ENCODE measurements at regions of chr14 and their contacts with region 1.

Region 1: GRCh38 chr14:88168498-88169165 is 154.4 kb downstream of the KCNK10 start:
- DNase-seq: peak; percentile 69
- ATAC-seq: peak; percentile 91
- H3K4me3 Mint-ChIP-seq: no peak overlapping the region
- H3K27ac Mint-ChIP-seq: no peak overlapping the region
- H3K4me1 Mint-ChIP-seq: no peaks in the 10 kb centered on the region
- H3K27me3 Mint-ChIP-seq: peaks cover 7% of the 10 kb centered on the region

Region 2: DNA sequence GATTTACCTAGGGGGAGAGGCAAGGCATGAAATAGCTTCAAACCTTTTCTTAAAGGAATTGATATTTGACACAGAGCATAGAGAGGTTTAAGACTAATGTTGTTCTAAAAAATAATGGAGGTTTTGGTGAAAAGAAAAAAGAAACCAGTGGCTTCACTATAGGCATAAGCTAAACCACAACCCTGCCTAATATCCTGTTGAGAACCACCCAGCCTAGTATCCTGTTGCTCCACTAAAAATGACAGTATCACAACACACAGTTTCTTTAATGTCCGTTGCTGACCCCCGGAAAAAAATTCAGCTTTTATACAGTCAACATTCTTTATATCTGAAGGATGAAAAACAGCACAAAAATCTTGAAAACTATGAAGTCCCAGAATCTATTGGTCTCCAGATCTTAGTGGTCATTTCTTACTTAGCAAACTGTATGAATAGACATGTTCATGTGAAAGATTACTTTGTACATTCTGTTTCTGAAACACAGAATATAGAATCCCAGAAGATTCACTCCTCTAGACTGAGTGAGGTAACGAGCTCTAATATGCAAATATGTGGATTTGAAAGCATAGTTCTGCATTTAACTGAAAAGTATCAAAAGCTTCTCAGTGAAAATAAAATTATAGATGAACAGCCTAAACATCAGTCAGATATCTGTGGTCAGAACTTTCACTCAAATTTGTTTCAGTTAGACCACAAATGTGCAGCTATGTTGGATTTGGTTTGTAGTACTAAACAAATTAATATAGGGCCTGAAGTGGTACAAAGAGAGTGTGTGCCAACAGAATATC is 216.1 kb before region 1 on chr14:
- CTCF ChIA-PET with region 1: interaction called, 79 read pairs
- POLR2A ChIA-PET with region 1: no interaction called
- intact Hi-C with region 1: no loop called
- DNase-seq: no peak
- ATAC-seq: no peak
- H3K4me3 Mint-ChIP-seq: no peak overlapping the region
- H3K27ac Mint-ChIP-seq: peak overlapping the region; percentile 67
- H3K4me1 Mint-ChIP-seq: peaks cover 20% of the 10 kb centered on the region
- H3K27me3 Mint-ChIP-seq: no peaks in the 10 kb centered on the region

Region 3: GRCh38 chr14:88013750-88014349 is 154.8 kb before region 1 on chr14:
- CTCF ChIA-PET with region 1: interaction called, 7 read pairs
- POLR2A ChIA-PET with region 1: no interaction called
- intact Hi-C with region 1: loop called (anchors 2 to 5 kb)
- DNase-seq: peak; percentile 50
- ATAC-seq: peak; percentile 58
- H3K4me3 Mint-ChIP-seq: no peak overlapping the region
- H3K27ac Mint-ChIP-seq: no peak overlapping the region
- H3K4me1 Mint-ChIP-seq: peaks cover 63% of the 10 kb centered on the region
- H3K27me3 Mint-ChIP-seq: no peaks in the 10 kb centered on the region

Region 4: DNA sequence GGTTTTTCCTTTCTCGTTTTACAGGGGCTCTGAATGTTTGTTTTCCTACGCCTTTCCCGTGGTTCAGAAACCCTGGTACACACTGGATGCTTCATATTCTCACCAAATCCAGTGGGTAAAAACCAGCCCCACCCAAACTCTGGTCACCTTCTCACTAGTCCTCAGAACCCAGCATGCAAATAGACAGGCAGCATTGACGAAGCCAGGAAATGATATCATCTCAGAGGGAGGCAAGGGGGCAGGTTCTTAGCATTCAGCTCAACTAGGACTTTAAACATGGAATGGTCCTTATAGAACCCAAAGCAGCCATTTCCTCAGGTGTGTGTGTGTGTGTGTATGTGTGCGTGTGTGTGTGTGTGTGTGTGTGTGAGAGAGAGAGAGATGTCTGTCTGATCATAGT is 12.4 kb after region 1 on chr14:
- CTCF ChIA-PET with region 1: interaction called, 14 read pairs
- POLR2A ChIA-PET with region 1: no interaction called
- intact Hi-C with region 1: no loop called
- DNase-seq: no peak
- ATAC-seq: peak; percentile 68
- H3K4me3 Mint-ChIP-seq: no peak overlapping the region
- H3K27ac Mint-ChIP-seq: no peak overlapping the region
- H3K4me1 Mint-ChIP-seq: peaks cover 5% of the 10 kb centered on the region
- H3K27me3 Mint-ChIP-seq: no peaks in the 10 kb centered on the region

Region 5: DNA sequence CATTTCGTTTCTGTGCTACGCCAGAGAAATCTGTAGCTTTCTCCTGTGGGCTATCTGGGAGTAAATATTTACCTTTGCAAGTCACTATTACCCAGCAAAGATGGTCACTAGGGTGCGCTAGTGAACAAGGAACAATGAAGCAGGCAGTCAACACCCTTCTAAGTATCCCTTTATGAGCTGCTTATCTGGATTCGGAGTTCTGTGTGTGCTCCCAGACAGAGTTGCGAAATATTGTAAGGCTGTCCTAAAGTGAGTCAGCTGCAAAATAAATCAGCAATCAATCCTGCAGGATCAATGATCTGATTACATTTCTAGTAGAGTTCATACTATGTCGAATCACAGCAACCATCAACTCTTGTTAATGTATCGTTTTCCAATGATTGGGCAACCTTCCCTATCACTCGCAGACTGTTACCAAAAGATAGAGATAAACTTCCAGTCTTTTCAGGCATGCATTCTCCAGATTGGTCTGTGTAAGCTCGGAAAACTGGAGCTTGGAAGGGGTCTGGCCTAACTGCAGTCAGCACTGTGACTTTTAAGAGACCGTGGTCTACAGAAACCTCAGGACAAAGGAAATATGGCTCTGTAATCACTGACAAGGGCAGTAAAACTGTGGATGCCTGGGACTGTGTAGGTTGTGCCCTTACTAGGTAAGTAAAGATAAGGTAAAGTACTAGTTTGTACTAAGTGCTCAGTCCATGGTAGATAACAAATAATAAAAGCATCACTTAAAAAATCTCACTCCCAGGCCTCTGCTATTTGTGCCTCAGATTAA is 21.0 kb after region 1 on chr14:
- CTCF ChIA-PET with region 1: interaction called, 10 read pairs
- POLR2A ChIA-PET with region 1: no interaction called
- intact Hi-C with region 1: no loop called
- DNase-seq: peak; percentile 78
- ATAC-seq: peak; percentile 64
- H3K4me3 Mint-ChIP-seq: no peak overlapping the region
- H3K27ac Mint-ChIP-seq: no peak overlapping the region
- H3K4me1 Mint-ChIP-seq: peaks cover 5% of the 10 kb centered on the region
- H3K27me3 Mint-ChIP-seq: peaks cover 10% of the 10 kb centered on the region

Region 6: DNA sequence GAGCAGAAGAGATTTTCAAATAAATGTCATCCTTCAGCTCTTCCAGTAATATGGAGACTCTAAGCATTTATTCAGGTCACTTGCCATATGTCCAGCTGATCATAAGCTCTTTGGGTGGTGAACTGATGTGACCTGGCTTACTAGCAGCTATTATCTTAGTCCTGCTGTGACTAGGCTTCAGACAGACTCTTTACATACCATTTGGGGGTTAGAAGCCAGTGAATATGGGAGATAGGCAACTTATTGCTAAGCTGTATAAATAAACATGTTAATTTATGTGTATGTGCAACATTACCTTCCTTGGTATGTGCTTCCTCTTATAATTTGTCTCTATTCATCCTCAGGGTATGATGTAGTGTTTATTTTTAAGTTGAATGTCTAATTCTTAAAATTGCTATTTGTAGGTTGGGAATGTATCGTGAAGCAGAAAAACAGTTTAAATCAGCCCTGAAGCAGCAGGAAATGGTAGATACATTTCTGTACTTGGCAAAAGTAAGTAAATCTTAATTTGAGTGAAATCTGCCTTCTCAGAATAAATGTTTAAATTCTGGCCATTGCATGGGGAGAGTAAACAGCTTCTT is 688.2 kb after region 1 on chr14:
- CTCF ChIA-PET with region 1: no interaction called
- POLR2A ChIA-PET with region 1: no interaction called
- intact Hi-C with region 1: no loop called
- DNase-seq: no peak
- ATAC-seq: no peak
- H3K4me3 Mint-ChIP-seq: no peak overlapping the region
- H3K27ac Mint-ChIP-seq: no peak overlapping the region
- H3K4me1 Mint-ChIP-seq: no peaks in the 10 kb centered on the region
- H3K27me3 Mint-ChIP-seq: no peaks in the 10 kb centered on the region

Region 7: GRCh38 chr14:89425931-89426330 is 1257.3 kb after region 1 on chr14:
- CTCF ChIA-PET with region 1: no interaction called
- POLR2A ChIA-PET with region 1: no interaction called
- intact Hi-C with region 1: no loop called
- DNase-seq: no peak
- ATAC-seq: no peak
- H3K4me3 Mint-ChIP-seq: no peak overlapping the region
- H3K27ac Mint-ChIP-seq: peak overlapping the region; percentile 60
- H3K4me1 Mint-ChIP-seq: peaks cover 75% of the 10 kb centered on the region
- H3K27me3 Mint-ChIP-seq: no peaks in the 10 kb centered on the region

Measured in activated CD4-positive, alpha-beta T cell treated with anti-CD3 and anti-CD28 coated beads for 36 hours (primary cell).